Motor neuron (in vitro differentiated cells): ENCODE measurements at regions of chr3 and their contacts with region 1.

Region 1: GRCh38 chr3:59212128-59212779 is 162.4 kb upstream of the CFAP20DC start:
- ATAC-seq: peak; percentile 72 to 89 (median 79)
- H3K4me3 ChIP-seq: no peak overlapping the region
- H3K27ac ChIP-seq: no peak overlapping the region
- H3K4me1 ChIP-seq: peaks cover 0 to 2% of the 10 kb centered on the region in 2 donors

Region 2: GRCh38 chr3:58994746-58995330 is 217.4 kb before region 1 on chr3:
- in situ Hi-C with region 1: loop called in 1 of 9 experiments (anchors 25 kb)
- ATAC-seq: peak in 3 of 8 experiments; percentile 15 to 73 (median 42)
- H3K4me3 ChIP-seq: no peak overlapping the region
- H3K27ac ChIP-seq: no peak overlapping the region
- H3K4me1 ChIP-seq: peaks cover 3 to 6% of the 10 kb centered on the region in 2 donors

Region 3: GRCh38 chr3:59093521-59093920 is 118.7 kb before region 1 on chr3:
- in situ Hi-C with region 1: no loop called
- ATAC-seq: no peak
- H3K4me3 ChIP-seq: no peak overlapping the region
- H3K27ac ChIP-seq: no peak overlapping the region
- H3K4me1 ChIP-seq: no peaks in the 10 kb centered on the region

Region 4: GRCh38 chr3:59559721-59560435 is 347.6 kb after region 1 on chr3:
- in situ Hi-C with region 1: loop called in 1 of 9 experiments (anchors 25 kb)
- ATAC-seq: peak; percentile 96 to 99 (median 97)
- H3K4me3 ChIP-seq: no peak overlapping the region
- H3K27ac ChIP-seq: peak overlapping the region; percentile 64 to 69
- H3K4me1 ChIP-seq: peaks cover 14 to 30% of the 10 kb centered on the region in 2 donors

Region 5: DNA sequence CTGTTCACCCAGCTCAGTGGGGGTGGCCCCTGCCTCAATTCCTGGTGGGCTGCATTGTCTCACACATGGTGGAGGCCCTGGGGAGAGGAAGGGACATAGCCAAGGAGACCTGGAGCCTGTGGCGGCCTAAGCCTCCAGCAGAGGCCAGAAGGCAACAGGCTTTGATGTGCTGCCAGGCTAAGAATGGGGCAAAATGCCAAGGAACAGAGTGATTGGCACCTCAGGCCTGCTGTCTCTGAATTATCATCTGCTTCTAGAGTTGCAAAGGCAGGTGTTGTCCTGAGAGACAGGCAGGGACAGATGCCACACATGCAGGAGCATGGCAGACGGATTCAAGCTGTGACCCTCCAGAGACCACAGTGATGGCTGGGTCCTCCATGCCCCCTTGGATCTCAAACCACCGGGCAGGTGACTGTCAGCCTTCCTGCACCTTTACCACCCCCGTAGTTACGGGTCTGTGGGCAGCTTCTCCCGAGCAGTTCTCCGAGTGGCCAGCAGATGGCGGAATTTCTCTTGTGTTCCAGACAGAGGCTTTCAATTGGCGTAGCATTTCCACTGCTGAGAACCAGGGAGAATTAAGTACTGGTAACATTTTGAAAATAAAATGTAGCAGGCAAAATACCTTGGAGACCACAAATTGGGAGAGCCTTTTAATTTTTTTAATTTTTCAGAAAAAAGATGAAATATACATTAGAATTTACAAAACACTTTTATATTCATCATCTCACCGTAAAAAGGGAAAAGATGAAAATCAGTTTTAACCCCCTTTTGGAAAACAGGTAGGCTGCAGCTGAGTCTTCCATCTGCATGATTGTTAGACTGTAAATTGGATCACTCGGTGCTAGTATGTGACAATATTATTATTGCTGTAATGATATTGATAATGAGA is 363.1 kb after region 1 on chr3:
- in situ Hi-C with region 1: loop called in 2 of 9 experiments (anchors 25 kb)
- ATAC-seq: peak; percentile 49 to 88 (median 82)
- H3K4me3 ChIP-seq: no peak overlapping the region
- H3K27ac ChIP-seq: no peak overlapping the region
- H3K4me1 ChIP-seq: peaks cover 0 to 3% of the 10 kb centered on the region in 2 donors

Region 6: DNA sequence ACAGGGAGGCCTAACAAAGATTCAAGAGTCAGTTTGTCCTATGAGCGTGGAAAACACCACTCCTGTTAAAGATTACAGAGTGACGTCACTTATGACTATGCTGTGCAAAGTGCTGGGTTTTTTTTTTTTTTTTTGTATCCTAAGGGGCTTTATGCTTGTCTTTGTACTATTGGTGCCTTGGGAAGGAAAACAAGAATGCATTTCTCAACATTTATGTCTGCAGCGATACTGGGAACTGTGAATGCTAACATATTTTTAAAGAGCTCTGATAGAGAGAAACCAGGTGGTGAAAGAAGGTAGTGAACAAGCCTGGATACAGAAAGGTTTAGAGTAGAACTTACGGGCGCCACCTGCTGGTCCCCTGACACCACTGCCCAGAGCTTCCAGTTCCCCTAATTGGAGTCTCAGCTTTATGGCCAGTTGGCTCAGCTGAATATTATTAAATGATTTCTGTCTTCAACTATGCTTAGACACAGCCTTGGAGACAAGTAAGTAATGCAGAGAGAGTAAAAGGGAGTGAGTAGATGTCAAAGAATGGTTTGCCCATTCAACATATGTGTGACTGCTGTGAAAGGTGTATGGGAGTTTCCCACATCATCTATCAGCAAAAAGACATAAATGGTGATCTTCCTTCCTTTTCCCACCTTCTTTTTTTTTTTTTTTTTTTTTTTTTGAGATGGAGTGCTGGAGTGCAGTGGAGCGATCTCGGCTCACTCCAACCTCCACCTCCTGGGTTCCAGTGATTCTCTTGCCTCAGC is 645.5 kb after region 1 on chr3:
- in situ Hi-C with region 1: loop called in 2 of 9 experiments (anchors 25 kb)
- ATAC-seq: peak; percentile 59 to 100 (median 88)
- H3K4me3 ChIP-seq: no peak overlapping the region
- H3K27ac ChIP-seq: no peak overlapping the region
- H3K4me1 ChIP-seq: peaks cover 16 to 22% of the 10 kb centered on the region in 2 donors